Heart left ventricle (tissue), 16 donors: ENCODE measurements at regions of chr2 and their contacts with region 1.

Region 1: DNA sequence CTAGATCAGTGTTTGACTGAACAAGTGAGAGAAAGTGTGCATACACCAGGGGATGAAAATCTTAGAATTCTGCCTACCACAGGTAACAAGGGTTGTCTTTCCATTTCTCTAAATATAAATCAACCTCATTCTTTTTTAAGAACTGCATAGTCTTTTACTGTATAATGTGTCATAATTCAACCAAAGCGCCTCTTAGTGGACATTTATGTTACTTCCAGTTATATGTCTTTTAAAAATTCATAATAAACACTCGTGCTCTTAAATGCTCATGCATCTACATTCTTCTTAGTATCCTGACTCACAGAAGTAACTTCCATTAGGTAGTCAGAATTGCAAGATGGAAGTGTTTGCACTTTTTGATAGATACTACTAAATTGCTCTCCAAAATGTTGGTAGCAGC is 76.2 kb downstream of the CHRNA1 start:
- DNase-seq: no peak
- ATAC-seq: peak in 1 of 4 donors; percentile 23
- H3K4me3 ChIP-seq: no peak overlapping the region
- H3K27ac ChIP-seq: no peak overlapping the region
- H3K4me1 ChIP-seq: peaks cover 0 to 23% (median 0%) of the 10 kb centered on the region in 12 donors
- H3K27me3 ChIP-seq: no peaks in the 10 kb centered on the region
- CTCF ChIP-seq: peak; percentile 13 to 62 (median 37)
- POLR2A ChIP-seq: no peak

Region 2: DNA sequence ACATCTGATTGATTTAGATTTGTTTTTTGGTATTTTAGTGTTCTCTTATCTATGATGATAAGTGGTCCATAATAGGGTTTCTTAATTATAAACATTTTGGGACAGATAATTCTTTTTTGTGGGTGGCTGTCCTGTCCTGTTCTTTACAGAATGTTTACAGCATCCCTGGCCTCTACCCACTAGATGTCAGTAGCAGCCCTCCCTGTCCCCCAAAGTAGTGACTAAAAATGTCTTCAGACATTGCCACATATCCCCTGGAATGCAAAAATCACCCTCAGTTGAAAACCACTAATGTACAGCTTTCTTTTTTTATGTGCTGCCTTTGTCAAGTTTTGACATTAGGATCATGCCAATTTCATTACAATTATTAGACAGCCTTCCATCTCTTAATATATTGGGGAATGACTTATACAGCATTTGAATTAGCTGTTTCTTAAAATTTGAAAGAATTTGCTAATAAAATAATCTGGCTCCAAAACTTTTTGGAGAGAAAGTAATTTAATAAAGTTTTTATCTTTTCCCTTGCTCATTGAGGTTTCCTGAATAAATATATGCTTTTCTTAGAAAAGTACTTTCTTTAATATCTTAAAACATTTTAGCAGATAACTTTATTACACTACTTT is 110.0 kb before region 1 on chr2:
- intact Hi-C with region 1: loop called in 7 of 10 experiments (anchors 2 to 10 kb)
- DNase-seq: no peak
- ATAC-seq: peak in 2 of 4 donors; percentile 48 to 50
- H3K4me3 ChIP-seq: no peak overlapping the region
- H3K27ac ChIP-seq: no peak overlapping the region
- H3K4me1 ChIP-seq: peaks cover 0 to 43% (median 4%) of the 10 kb centered on the region in 12 donors
- H3K27me3 ChIP-seq: no peaks in the 10 kb centered on the region
- CTCF ChIP-seq: peak in 11 of 12 donors; percentile 19 to 54 (median 42)
- POLR2A ChIP-seq: no peak